HEK293 (cell line): ENCODE measurements at regions of chr1 and their contacts with region 1.

Region 1: GRCh38 chr1:72037745-72038343 is 244.5 kb downstream of the NEGR1 start:
- H3K4me3 ChIP-seq: no peak overlapping the region
- H3K27ac ChIP-seq: no peak overlapping the region
- H3K4me1 ChIP-seq: no peaks in the 10 kb centered on the region
- CTCF ChIP-seq: no peak

Region 2: DNA sequence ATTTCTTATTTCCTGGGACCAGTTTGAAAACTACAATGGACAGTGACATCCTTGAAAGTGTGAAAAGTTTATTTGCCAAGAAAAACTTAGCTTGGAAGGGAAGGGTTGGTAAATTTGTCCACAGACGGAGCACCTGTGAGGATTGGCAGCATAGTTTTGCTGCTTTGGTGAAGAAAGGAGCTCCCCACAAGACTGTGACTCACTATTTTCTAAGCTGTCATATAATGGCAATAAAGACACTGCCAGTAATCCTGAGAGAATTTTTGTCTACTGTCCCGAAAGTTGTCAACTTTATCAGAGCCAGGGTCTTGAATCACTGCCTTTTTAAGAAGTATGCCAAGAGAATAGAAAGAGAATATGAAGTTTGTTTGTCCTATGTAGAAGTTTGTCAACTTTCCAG is 13.7 kb after region 1 on chr1:
- CTCF ChIA-PET with region 1: interaction called, 14 read pairs
- POLR2A ChIA-PET with region 1: no interaction called
- H3K4me3 ChIP-seq: no peak overlapping the region
- H3K27ac ChIP-seq: no peak overlapping the region
- H3K4me1 ChIP-seq: no peaks in the 10 kb centered on the region
- CTCF ChIP-seq: no peak

Region 3: DNA sequence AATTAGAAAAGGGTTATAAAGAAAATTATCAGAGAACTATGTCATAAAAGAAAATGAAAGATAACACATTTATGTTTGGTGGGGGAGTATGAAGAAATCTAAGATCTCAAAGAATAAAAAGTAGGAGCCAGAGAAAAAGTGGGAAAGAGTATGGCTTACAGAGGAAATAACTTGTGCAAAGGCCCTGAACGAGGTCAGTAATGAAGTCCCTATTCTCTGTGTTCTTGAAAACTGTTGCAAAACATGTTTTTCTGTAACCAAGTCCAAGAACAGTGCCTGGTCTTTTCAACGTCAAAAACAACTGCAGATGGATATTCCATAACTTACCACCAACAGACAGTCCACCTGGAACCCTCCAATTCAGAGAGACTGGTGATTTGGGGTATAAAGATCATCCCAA is 56.4 kb after region 1 on chr1:
- CTCF ChIA-PET with region 1: no interaction called
- POLR2A ChIA-PET with region 1: no interaction called
- H3K4me3 ChIP-seq: no peak overlapping the region
- H3K27ac ChIP-seq: no peak overlapping the region
- H3K4me1 ChIP-seq: no peaks in the 10 kb centered on the region
- CTCF ChIP-seq: no peak